ENCODE measurements at regions of chr12 and their contacts with region 1.

Region 1: GRCh38 chr12:123271001-123271729 is 491 bp downstream of the CDK2AP1 start:
- DNase-seq: peak; percentile 48 to 83 (median 74)
- ATAC-seq: peak; percentile 86
- H3K4me3 ChIP-seq: peak overlapping the region in 1 of 2 experiments; percentile 49
- H3K4me3 Mint-ChIP-seq: no peak overlapping the region
- H3K27ac ChIP-seq: no peak overlapping the region
- H3K27ac Mint-ChIP-seq: no peak overlapping the region
- H3K4me1 ChIP-seq: peaks cover 26% of the 10 kb centered on the region
- H3K4me1 Mint-ChIP-seq: peaks cover 32% of the 10 kb centered on the region
- H3K27me3 ChIP-seq: no peaks in the 10 kb centered on the region
- H3K27me3 Mint-ChIP-seq: no peaks in the 10 kb centered on the region
- CTCF ChIP-seq: no peak

Region 2: GRCh38 chr12:122888232-122888867 is 382.8 kb before region 1 on chr12:
- CTCF ChIA-PET with region 1: no interaction called
- POLR2A ChIA-PET with region 1: no interaction called
- intact Hi-C with region 1: no loop called
- DNase-seq: peak in 6 of 9 experiments; percentile 42 to 89 (median 71)
- ATAC-seq: peak; percentile 88
- H3K4me3 ChIP-seq: peak overlapping the region in 1 of 2 experiments; percentile 26
- H3K4me3 Mint-ChIP-seq: peak overlapping the region; percentile 77
- H3K27ac ChIP-seq: peak overlapping the region; percentile 17 to 63
- H3K27ac Mint-ChIP-seq: peak overlapping the region; percentile 93
- H3K4me1 ChIP-seq: peaks cover 74% of the 10 kb centered on the region
- H3K4me1 Mint-ChIP-seq: peaks cover 87% of the 10 kb centered on the region
- H3K27me3 ChIP-seq: no peaks in the 10 kb centered on the region
- H3K27me3 Mint-ChIP-seq: no peaks in the 10 kb centered on the region
- CTCF ChIP-seq: no peak

Region 3: DNA sequence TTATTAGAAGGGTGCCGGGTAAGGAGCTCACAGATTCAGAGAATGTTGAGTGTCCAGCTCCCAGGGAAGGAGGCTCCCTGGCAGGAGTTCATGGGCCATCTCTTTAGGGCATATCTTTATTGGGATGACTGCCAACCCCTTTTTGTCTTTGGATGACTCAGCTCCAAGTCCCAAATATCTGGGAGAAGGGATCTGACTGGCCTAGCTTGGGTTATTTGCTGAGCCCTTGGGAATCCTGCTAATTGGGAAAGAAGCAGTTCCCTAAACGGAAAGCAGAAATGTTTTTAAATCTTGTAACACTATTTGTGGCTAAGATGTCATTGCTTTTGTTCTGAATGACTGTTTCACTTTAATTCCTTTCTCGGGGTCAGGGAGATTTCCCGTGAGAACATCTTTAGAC is 343.4 kb after region 1 on chr12:
- CTCF ChIA-PET with region 1: no interaction called
- POLR2A ChIA-PET with region 1: no interaction called
- intact Hi-C with region 1: loop called (anchors 1 kb)
- DNase-seq: no peak
- ATAC-seq: no peak
- H3K4me3 ChIP-seq: no peak overlapping the region
- H3K4me3 Mint-ChIP-seq: no peak overlapping the region
- H3K27ac ChIP-seq: no peak overlapping the region
- H3K27ac Mint-ChIP-seq: no peak overlapping the region
- H3K4me1 ChIP-seq: no peaks in the 10 kb centered on the region
- H3K4me1 Mint-ChIP-seq: peaks cover 2% of the 10 kb centered on the region
- H3K27me3 ChIP-seq: no peaks in the 10 kb centered on the region
- H3K27me3 Mint-ChIP-seq: no peaks in the 10 kb centered on the region
- CTCF ChIP-seq: no peak

Region 4: DNA sequence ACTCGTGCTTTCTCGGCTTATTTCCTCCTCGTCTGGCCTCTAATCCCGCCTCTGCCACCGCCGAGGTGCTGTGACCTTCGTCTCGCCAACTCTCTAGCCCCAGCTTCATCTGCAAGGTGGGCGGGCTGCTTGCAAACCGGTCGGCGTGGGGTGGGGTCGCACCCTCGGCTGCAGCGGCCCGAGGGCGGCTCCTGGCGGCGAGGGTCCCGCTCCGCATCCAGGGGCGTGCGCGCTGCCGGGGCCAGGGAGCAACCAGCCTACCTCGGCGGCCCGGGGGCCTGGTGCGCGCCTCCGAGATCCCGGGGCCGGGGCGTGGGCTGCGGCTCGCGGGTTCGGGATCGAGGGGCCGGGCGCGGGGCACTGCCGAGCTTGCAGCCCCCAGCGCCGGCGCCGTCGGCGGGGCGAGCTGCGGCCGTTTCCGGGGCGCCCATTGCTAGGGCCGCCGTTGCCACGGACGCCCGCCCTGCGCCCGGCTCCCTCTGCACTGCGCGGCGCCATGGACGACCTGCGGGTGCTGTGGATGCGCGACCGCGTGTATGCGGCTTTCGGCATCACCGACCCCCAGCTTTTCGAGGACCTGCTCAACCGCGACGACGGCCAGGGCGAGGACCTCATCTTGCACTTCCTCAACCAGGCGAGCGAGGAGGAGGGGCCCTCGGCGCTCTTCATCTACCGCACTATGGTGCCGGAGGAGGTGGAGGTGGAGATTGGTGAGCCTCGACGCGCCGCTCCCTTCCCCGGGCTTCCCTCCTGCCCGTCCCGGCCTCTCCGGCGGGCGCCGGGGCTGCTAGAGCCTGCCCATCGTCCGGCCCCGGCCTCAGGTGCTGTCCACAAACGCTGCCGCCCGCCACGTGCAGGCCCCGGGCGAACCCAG is 490.9 kb after region 1 on chr12 and contains the start of gene DNAH10:
- CTCF ChIA-PET with region 1: no interaction called
- POLR2A ChIA-PET with region 1: no interaction called
- intact Hi-C with region 1: no loop called
- DNase-seq: peak in 8 of 9 experiments; percentile 8 to 65 (median 36)
- ATAC-seq: peak; percentile 77
- H3K4me3 ChIP-seq: peak within 1 kb of the TSS; percentile 51 to 54
- H3K4me3 Mint-ChIP-seq: peak within 1 kb of the TSS; percentile 85
- H3K27ac ChIP-seq: no peak within 1 kb of the TSS
- H3K27ac Mint-ChIP-seq: no peak within 1 kb of the TSS
- H3K4me1 ChIP-seq: peaks cover 7% of the 10 kb centered on the region
- H3K4me1 Mint-ChIP-seq: peaks cover 4% of the 10 kb centered on the region
- H3K27me3 ChIP-seq: peaks cover 0 to 2% of the 10 kb centered on the region in 2 experiments
- H3K27me3 Mint-ChIP-seq: no peaks in the 10 kb centered on the region
- CTCF ChIP-seq: no peak
- total RNA-seq, gene DNAH10: 0.16 to 0.19 TPM

Region 5: DNA sequence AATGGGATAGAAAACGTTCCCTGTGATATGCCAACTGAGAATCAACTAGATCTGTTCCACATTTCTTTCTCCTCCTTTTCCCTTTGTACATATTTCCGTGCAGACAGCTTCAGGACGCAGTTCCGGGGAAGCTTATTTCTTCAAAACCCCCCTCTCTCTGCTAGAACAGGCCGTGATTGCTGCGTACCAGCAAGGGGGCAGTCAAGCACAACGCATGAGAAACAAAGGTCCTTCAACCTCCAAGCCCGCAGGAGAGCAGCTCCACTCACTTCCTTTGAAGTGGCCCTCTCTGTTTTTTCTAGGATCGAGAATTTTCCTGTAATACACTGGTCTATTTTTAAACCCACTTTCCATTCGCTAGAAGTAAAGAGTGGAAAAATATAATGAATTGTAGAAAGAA is 782.7 kb after region 1 on chr12:
- CTCF ChIA-PET with region 1: no interaction called
- POLR2A ChIA-PET with region 1: no interaction called
- intact Hi-C with region 1: no loop called
- DNase-seq: peak in 1 of 9 experiments; percentile 13
- ATAC-seq: no peak
- H3K4me3 ChIP-seq: no peak overlapping the region
- H3K4me3 Mint-ChIP-seq: no peak overlapping the region
- H3K27ac ChIP-seq: no peak overlapping the region
- H3K27ac Mint-ChIP-seq: no peak overlapping the region
- H3K4me1 ChIP-seq: no peaks in the 10 kb centered on the region
- H3K4me1 Mint-ChIP-seq: no peaks in the 10 kb centered on the region
- H3K27me3 ChIP-seq: no peaks in the 10 kb centered on the region
- H3K27me3 Mint-ChIP-seq: no peaks in the 10 kb centered on the region
- CTCF ChIP-seq: no peak

Measured in CD8-positive, alpha-beta T cell (primary cell).